Activated naive CD4-positive, alpha-beta T cell treated with anti-CD3 and anti-CD28 coated beads for 36 hours (primary cell): ENCODE measurements at regions of chr5 and their contacts with region 1.

Region 1: DNA sequence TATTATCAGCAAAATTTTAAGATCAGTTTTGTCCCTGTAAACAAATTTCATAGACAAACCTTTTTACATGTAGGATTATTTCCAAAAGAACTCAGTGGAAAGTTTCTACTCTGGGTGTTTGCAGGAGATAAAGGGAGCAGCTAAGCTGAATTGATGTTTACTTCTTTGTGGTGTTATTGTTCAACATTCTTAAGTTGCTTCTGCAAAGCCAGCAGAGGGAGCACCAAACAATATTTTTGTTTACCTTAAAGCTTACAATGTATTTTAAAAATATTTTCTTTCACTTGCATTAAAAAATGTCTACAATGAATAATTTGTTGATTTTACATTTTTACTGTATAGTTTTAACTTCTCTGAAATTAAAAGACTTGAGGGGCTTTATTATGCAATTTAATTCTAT is 135.4 kb downstream of the ATG10 start:
- DNase-seq: no peak
- H3K4me3 Mint-ChIP-seq: no peak overlapping the region
- H3K27ac Mint-ChIP-seq: no peak overlapping the region
- H3K4me1 Mint-ChIP-seq: peaks cover 15% of the 10 kb centered on the region
- H3K27me3 Mint-ChIP-seq: no peaks in the 10 kb centered on the region

Region 2: DNA sequence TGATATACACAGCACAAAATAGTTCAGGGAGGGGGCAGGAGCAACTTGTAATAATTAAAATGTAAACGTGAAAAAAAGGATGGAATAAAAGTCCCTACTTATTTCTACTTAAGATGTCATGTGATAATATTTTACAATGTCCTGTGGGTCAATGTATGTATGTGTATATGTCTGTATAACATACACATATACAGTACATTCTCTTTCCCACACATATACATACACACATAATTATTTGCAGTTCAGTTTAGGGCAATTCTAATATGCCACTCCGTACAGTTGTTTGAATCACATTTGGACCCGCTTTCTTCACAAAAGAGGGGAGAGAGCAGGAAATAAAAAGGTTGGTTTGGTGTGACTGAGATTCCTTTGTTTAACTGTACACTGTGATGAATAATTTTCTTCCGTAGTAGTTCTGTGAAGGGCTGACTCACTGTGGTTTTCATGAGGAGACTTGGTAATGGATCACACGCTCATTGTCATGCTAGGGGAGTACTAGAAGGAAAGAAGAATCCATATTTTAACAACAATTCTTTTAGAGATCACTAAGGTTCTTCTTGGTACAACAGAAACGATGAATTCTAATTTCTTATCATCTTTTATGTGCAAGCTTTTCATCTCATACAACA is 687.1 kb before region 1 on chr5:
- CTCF ChIA-PET with region 1: no interaction called
- intact Hi-C with region 1: loop called (anchors 2 kb)
- DNase-seq: peak; percentile 36
- H3K4me3 Mint-ChIP-seq: no peak overlapping the region
- H3K27ac Mint-ChIP-seq: no peak overlapping the region
- H3K4me1 Mint-ChIP-seq: peaks cover 13% of the 10 kb centered on the region
- H3K27me3 Mint-ChIP-seq: no peaks in the 10 kb centered on the region

Region 3: DNA sequence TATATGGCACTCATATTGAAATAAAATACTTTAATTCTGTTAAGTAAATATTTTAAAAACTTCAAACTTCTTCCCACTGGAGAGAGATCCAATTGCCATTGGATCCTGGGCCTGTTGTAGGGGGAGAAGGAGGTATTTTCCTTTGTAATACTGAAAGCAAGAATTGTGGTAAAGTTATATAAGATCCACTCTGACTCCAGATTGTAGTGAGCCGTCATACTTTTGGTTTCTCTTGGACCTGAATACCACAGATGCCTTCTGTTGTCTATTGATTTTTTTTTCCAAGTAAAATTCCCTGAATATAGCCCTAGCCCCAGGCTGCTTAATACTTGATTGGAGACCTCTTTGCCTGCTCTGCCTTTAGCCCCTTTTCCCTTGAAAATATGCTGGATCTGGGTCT is 48.6 kb before region 1 on chr5:
- CTCF ChIA-PET with region 1: no interaction called
- intact Hi-C with region 1: no loop called
- DNase-seq: no peak
- H3K4me3 Mint-ChIP-seq: no peak overlapping the region
- H3K27ac Mint-ChIP-seq: no peak overlapping the region
- H3K4me1 Mint-ChIP-seq: peaks cover 3% of the 10 kb centered on the region
- H3K27me3 Mint-ChIP-seq: no peaks in the 10 kb centered on the region

Region 4: DNA sequence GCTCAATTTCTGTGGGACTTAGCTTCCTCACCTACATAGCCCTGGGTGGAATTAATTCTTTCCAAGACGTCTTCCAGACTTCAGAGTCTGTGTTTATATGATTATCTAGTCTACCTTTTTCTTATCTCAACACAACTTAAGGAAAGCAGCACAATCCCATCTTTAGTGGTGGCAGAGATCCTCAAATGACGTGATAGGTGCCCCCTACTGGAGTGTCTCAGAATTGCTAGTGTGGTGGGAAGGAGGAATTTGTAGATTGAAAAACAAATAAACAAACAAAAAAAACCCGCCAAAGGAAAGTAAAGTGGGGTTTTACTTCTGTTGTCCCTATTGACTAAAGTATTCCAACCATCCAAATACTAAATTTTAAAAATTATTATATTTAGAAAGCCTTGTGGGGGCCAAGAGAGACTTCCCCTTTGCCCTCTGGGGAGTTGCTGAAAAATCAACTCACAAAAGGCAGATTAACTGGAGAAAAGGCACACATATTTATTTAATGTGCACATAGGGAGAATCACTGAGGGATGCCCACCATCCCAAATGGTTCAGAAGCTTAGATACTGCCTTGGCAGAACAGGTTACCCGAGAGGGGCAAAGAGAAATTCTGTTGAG is 686.6 kb after region 1 on chr5:
- CTCF ChIA-PET with region 1: no interaction called
- intact Hi-C with region 1: no loop called
- DNase-seq: peak; percentile 57
- H3K4me3 Mint-ChIP-seq: no peak overlapping the region
- H3K27ac Mint-ChIP-seq: no peak overlapping the region
- H3K4me1 Mint-ChIP-seq: no peaks in the 10 kb centered on the region
- H3K27me3 Mint-ChIP-seq: no peaks in the 10 kb centered on the region

Region 5: GRCh38 chr5:83204651-83205050 is 1097.4 kb after region 1 on chr5:
- CTCF ChIA-PET with region 1: no interaction called
- intact Hi-C with region 1: no loop called
- DNase-seq: no peak
- H3K4me3 Mint-ChIP-seq: no peak overlapping the region
- H3K27ac Mint-ChIP-seq: no peak overlapping the region
- H3K4me1 Mint-ChIP-seq: no peaks in the 10 kb centered on the region
- H3K27me3 Mint-ChIP-seq: no peaks in the 10 kb centered on the region